Gastrocnemius medialis (tissue), 4 donors: ENCODE measurements at regions of chr9 and their contacts with region 1.

Region 1: DNA sequence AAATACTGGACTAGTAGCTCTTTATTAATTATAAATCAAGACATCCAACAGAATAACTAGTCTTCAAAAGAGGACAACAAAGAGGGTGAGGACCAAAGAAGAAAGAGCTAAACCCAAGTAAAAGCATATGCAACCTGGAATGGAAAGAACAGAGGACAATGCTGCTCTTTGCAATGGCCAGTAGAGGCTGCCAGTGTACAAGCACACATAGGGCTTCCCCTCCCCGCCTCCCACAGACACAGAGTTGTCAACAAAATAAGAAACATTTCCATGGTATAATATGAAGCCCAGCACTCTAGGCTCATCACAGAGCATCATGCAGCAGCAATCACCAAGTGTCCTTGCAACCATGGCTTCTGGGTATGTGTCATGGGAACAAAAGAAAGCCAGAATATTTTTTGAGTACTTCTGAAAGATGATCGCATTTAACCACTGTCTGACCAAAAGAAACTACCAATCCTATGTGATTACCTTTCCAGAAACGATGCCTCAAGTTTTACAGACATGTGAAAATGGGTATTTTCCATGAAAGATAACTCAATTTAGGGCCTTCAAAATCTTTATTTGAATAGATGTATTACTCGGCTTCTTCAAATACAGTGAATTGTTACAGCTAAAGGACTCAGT is 58.1 kb downstream of the RFX3 start:
- DNase-seq: peak; percentile 49 to 61
- ATAC-seq: peak; percentile 95 to 98
- H3K4me3 ChIP-seq: no peak overlapping the region
- H3K27ac ChIP-seq: peak overlapping the region in 1 of 4 donors; percentile 2
- H3K4me1 ChIP-seq: peaks cover 17 to 18% of the 10 kb centered on the region in 2 donors
- H3K27me3 ChIP-seq: no peaks in the 10 kb centered on the region
- CTCF ChIP-seq: peak; percentile 45 to 89 (median 72)
- POLR2A ChIP-seq: no peak

Region 2: GRCh38 chr9:3398232-3398648 is 69.5 kb before region 1 on chr9:
- in situ Hi-C with region 1: no loop called
- intact Hi-C with region 1: no loop called
- DNase-seq: no peak
- ATAC-seq: no peak
- H3K4me3 ChIP-seq: no peak overlapping the region
- H3K27ac ChIP-seq: no peak overlapping the region
- H3K4me1 ChIP-seq: peaks cover 0 to 9% of the 10 kb centered on the region in 2 donors
- H3K27me3 ChIP-seq: no peaks in the 10 kb centered on the region
- CTCF ChIP-seq: no peak
- POLR2A ChIP-seq: no peak

Region 3: GRCh38 chr9:3553076-3553765 is 85.5 kb after region 1 on chr9:
- in situ Hi-C with region 1: loop called in 1 of 4 experiments (anchors 25 kb)
- intact Hi-C with region 1: no loop called
- DNase-seq: no peak
- ATAC-seq: no peak
- H3K4me3 ChIP-seq: no peak overlapping the region
- H3K27ac ChIP-seq: no peak overlapping the region
- H3K4me1 ChIP-seq: no peaks in the 10 kb centered on the region
- H3K27me3 ChIP-seq: no peaks in the 10 kb centered on the region
- CTCF ChIP-seq: no peak
- POLR2A ChIP-seq: no peak

Region 4: DNA sequence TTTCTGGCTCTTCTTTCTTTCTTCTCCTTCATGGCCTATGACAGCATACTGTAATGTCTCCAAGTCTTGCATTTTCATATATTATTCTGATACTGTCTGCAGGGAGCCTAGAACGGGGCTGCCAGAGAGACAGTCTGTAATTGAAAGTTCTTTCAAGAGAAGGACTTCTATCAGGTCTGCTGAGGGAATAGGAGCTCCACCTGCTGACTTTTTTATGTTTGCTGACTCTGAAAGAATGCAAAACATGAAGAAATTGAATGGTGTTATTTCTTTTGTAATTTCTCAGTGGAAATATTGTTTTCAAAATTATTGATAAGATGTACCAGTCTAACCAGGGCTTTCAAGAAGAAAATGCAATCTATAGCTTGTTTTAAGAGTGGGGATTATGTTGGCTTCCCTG is 179.9 kb after region 1 on chr9:
- in situ Hi-C with region 1: no loop called
- intact Hi-C with region 1: loop called (anchors 10 kb)
- DNase-seq: no peak
- ATAC-seq: no peak
- H3K4me3 ChIP-seq: no peak overlapping the region
- H3K27ac ChIP-seq: no peak overlapping the region
- H3K4me1 ChIP-seq: no peaks in the 10 kb centered on the region
- H3K27me3 ChIP-seq: no peaks in the 10 kb centered on the region
- CTCF ChIP-seq: no peak
- POLR2A ChIP-seq: no peak